GM18951 (cell line): ENCODE measurements at regions of chr4 and their contacts with region 1.

Region 1: DNA sequence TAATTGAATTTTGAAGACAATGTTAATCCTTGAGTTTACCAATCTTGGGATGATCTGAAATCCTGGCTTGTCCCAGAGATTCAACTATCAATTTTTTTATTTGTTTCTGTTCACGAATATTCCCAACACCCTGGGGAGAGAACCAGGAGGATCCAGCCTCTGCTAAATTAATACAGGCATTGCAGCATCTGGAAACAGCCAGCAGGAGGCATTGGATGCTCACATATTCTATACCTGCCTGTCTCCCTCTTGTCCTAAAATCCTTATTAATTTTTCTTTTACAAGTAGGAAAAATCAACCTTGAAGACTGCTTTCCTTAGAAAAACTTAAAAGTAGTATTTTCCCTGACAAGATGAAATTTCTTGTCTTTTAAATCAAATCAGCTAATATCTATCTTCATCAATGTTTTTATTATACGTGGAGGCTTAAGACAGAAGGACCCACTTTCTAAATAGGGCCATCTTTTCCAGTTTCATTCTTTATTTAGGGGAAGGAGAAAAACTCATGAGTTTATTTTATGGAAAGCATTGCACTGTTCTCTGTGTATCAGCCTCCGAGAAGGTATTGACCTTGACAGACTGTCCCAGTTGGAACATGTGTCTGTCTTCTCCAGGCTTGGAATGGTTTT is 102.4 kb downstream of the CLNK start:
- POLR2A ChIP-seq: no peak

Region 2: GRCh38 chr4:10031668-10032590 is 550.2 kb before region 1 on chr4:
- in situ Hi-C with region 1: no loop called
- POLR2A ChIP-seq: no peak

Region 3: DNA sequence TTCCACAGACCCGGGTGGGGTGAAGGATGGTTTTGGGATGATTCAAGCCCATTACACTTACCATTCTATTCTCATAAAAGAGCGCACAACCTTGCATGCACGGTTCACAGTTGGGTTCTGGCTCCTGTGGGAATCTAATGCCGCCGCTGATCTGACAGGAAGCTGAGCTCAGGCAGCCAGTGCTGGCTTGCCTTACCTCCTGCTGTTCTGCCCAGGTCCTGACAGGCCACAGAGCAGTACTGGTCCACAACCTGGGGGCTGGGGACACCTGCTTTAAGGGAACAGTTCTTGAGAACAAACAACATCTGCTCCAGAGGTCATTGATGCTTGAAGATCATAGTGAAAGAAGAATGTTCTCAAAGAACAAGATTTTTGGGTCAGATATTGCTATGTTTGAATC is 854.5 kb after region 1 on chr4:
- in situ Hi-C with region 1: loop called (anchors 10 kb)
- POLR2A ChIP-seq: no peak